ENCODE measurements at regions of chr10 and their contacts with region 1.

Region 1: DNA sequence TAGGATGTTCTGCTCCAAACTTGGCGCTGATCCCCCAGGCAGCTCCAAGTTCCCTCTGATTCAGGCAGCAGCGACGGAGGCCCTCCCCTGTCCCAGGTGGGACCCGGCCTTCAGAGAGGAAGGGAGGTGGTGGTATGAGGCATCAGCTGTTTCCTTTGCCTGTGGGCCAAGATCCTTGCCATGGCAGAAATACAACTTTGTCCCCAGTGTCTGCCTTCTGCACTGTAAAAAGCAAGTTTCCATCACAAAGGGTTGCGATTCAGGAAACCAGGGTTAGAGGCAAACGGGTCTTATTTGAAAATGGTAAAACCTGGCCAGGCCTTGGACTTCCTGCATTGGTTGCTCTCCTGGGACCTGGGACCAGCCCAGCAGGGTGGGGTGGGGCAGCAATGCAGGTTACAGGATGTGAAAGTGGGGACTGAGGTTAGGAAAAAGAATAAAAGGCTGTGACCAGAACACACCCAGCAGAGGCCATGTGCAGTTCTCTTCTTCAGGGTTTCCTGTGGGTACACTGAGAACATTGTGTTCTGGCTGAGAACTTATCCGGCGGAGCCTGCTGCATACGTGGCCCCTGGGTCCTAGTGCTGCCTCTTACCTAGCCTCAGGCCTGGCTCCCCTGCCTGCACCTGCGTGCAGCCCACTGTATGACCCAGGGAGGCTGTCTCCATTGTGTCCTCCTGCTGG is 25.1 kb upstream of the DDIT4 start:
- H3K4me3 ChIP-seq: no peak overlapping the region
- H3K27ac ChIP-seq: peak overlapping the region; percentile 71
- H3K4me1 ChIP-seq: peaks cover 20% of the 10 kb centered on the region
- CTCF ChIP-seq: no peak

Region 2: GRCh38 chr10:72260588-72261322 is 12.1 kb after region 1 on chr10:
- CTCF ChIA-PET with region 1: interaction called, 6 read pairs
- POLR2A ChIA-PET with region 1: interaction called, 11 read pairs
- H3K4me3 ChIP-seq: peak overlapping the region; percentile 56
- H3K27ac ChIP-seq: peak overlapping the region; percentile 97
- H3K4me1 ChIP-seq: peaks cover 24% of the 10 kb centered on the region
- CTCF ChIP-seq: peak; percentile 70

Region 3: GRCh38 chr10:72435570-72435969 is 187.0 kb after region 1 on chr10:
- CTCF ChIA-PET with region 1: no interaction called
- POLR2A ChIA-PET with region 1: no interaction called
- H3K4me3 ChIP-seq: no peak overlapping the region
- H3K27ac ChIP-seq: no peak overlapping the region
- H3K4me1 ChIP-seq: no peaks in the 10 kb centered on the region
- CTCF ChIP-seq: no peak